Dorsolateral prefrontal cortex (tissue), 120 donors: ENCODE measurements at regions of chr17 and their contacts with region 1.

Region 1: GRCh38 chr17:43694077-43694870 is 32.6 kb upstream of the MEOX1 start:
- DNase-seq: peak; percentile 44 to 79 (median 72)
- H3K4me3 ChIP-seq: no peak overlapping the region
- H3K27ac ChIP-seq: no peak overlapping the region
- H3K27me3 ChIP-seq: no peaks in the 10 kb centered on the region
- CTCF ChIP-seq: peak; percentile 77 to 100 (median 97)

Region 2: DNA sequence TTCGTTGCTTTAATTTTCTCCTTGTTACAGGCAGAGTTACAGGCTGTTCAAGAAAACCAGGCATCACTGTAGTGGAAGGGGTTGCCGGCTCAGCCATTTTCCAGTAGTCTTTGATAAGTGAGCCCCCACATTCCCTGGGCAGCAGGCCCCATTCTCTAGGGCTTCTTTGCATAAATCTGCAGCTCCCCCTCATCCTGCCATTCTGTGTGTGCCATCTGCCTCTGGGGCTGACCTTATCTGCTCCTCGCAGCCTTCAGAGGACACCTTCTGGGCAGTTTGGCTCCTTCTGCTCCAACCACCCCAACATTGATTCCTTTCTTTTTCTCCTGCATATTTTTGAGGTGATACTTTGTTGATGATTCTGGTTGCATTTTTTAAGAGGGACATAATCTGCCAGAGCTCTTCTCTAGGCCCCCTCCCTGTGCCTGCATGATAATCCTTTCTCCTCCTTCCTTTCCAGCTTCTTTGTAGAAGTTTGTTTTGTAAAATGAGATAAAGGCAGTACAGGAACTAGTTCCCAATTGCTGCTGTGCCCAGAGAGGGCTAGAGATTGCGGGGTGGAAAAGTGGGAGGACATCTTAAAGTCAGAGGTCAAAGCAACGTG is 652.1 kb before region 1 on chr17:
- intact Hi-C with region 1: no loop called
- DNase-seq: peak in 1 of 10 donors; percentile 17
- H3K4me3 ChIP-seq: no peak overlapping the region
- H3K27ac ChIP-seq: no peak overlapping the region
- H3K27me3 ChIP-seq: no peaks in the 10 kb centered on the region
- CTCF ChIP-seq: no peak

Region 3: DNA sequence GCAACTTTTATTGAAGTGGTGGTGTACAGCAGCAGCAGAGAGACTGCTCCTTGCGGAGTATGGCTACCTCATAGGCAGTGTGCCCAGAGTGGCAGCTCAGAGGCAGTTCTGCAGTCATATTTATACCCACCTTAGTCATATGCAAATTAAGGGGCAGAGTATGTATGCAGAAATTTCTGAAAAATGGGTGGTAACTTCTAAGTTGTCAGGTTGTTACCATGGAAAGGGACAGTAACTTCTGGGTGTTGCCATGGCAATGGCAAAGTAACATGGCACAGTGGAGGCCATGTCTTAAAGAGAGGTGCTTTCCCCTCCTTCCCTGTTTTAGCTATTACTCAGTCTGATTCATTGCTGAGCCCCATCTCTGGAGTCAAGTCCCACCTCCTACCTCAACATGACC is 86.0 kb before region 1 on chr17:
- intact Hi-C with region 1: no loop called
- DNase-seq: peak in 1 of 10 donors; percentile 11
- H3K4me3 ChIP-seq: no peak overlapping the region
- H3K27ac ChIP-seq: no peak overlapping the region
- H3K27me3 ChIP-seq: no peaks in the 10 kb centered on the region
- CTCF ChIP-seq: no peak

Region 4: DNA sequence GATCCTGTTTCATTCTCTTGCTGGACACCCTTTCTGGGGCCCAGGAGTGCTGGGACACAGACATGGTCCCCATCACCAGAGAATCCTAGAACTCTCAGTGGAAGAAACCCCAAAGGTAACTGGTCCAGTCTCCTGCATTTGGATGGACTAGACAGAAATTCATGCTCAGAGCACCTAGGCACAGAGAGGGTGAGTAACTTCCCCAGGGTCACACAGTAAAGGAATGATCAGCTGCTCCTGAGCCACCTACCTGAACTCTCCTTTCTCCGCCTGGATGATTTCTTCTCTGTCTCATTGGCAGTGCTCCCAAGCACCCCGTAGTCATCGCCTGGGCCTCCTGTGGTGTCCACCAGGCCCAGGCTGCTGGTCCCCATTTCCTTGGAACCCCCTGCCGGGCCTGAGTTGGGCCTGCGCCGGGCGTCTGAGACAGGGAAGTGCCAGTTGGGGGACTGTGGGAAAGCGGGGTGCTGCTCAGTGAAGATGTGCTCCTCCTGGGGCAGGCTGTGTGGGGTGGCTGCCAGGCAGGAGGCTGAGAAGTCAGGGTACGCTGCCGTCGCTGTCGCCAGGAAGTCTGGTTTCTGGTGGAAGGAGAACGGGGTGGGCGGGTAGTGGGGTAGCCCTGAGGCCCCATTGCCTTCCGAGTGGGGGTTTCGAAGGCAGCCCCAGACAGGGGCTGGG is 33.3 kb before region 1 on chr17:
- intact Hi-C with region 1: no loop called
- DNase-seq: no peak
- H3K4me3 ChIP-seq: no peak overlapping the region
- H3K27ac ChIP-seq: no peak overlapping the region
- H3K27me3 ChIP-seq: peaks cover 0 to 9% (median 0%) of the 10 kb centered on the region in 45 donors
- CTCF ChIP-seq: no peak

Region 5: DNA sequence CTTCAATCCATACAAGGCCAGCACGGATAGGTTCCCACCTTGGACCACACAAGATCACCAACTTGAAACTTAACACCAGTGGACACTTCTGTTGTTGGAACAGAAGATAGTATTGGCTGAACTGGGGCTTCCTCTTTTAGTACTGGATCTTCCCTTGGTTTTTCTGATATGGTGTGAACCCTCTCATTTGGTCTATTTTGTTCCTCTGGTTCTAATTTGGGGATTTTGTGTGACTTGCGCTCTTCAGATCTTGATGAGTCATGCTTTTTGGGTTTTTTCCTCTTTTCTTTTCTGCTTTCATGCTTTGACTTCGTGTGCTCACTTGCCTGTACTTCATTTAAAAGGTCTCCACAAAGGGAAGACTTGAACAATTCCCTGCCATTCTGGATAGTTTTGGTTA is 25.3 kb after region 1 on chr17:
- intact Hi-C with region 1: loop called in 1 of 2 experiments (anchors 2 kb)
- DNase-seq: no peak
- H3K4me3 ChIP-seq: peak overlapping the region in 14 of 59 donors; percentile 71 to 90 (median 81)
- H3K27ac ChIP-seq: peak overlapping the region in 56 of 59 donors; percentile 84 to 99 (median 96)
- H3K27me3 ChIP-seq: no peaks in the 10 kb centered on the region
- CTCF ChIP-seq: no peak

Region 6: GRCh38 chr17:43760254-43760852 is 66.1 kb after region 1 on chr17:
- intact Hi-C with region 1: loop called (anchors 1 kb)
- DNase-seq: peak; percentile 89 to 97 (median 92)
- H3K4me3 ChIP-seq: no peak overlapping the region
- H3K27ac ChIP-seq: peak overlapping the region in 1 of 59 donors; percentile 53
- H3K27me3 ChIP-seq: peaks cover 0 to 20% (median 9%) of the 10 kb centered on the region in 45 donors
- CTCF ChIP-seq: peak; percentile 88 to 100 (median 99)

Region 7: GRCh38 chr17:44095642-44096496 is 401.6 kb after region 1 on chr17:
- intact Hi-C with region 1: no loop called
- DNase-seq: peak in 8 of 10 donors; percentile 36 to 79 (median 68)
- H3K4me3 ChIP-seq: peak overlapping the region in 43 of 59 donors; percentile 10 to 53 (median 29)
- H3K27ac ChIP-seq: peak overlapping the region; percentile 23 to 92 (median 82)
- H3K27me3 ChIP-seq: no peaks in the 10 kb centered on the region
- CTCF ChIP-seq: peak in 12 of 56 donors; percentile 8 to 41 (median 20)